HCT116 (cell line): ENCODE measurements at regions of chr19 and their contacts with region 1.

Region 1: DNA sequence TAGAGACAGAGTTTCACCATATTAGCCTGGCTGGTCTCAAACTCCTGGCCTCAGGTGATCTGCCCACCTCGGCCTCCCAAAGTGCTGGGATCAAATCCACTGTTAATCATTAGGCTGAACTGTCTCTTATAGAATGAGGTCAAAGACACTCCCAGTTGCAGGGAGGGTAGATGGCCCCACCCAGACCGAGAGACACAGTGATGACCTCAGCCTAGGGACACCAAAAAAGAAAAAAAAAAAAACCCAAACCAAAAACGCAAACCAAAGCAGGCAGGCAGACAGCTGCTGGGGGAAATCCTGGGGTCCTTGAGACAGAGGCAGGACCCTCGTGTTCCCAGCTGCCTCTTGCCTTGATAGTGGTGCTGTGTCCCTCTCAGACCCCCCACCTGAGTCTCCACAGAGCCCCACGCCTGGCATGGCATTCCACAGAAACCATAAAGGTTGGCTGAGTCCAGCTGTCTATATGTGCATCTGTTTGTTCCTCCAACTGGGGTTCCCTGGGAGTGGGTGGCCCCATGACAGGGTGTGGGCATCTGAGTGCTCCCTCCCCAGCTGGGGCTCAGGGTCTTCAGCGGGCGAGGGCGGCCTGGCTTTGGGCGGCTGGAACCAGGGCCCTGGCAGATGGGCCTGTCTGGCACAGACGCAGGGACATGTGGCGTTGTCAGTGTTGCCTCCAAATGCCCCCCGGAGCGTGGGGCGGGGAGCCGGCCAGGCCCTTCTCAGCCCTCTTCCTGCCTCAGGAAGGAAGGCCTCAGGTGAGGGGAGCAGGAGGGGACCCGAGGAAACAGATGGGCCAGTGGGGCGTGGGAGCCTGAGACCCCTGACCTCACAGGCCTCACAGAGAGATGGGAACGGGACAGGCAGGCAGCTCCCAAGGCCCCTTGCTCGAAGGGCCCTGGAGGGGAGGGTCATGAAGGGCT is 5.2 kb downstream of the DAND5 start:
- DNase-seq: no peak
- ATAC-seq: no peak
- H3K4me3 ChIP-seq: no peak overlapping the region
- H3K27ac ChIP-seq: no peak overlapping the region
- H3K4me1 ChIP-seq: peaks cover 0 to 15% of the 10 kb centered on the region in 2 experiments; a peak in 2 of 4 replicates
- H3K27me3 ChIP-seq: no peaks in the 10 kb centered on the region
- CTCF ChIP-seq: no peak
- POLR2A ChIP-seq: no peak
- RAD21 ChIP-seq: no peak

Region 2: GRCh38 chr19:12994701-12995595 is 20.4 kb after region 1 on chr19 and contains the start of gene NFIX:
- CTCF ChIA-PET with region 1: no interaction called
- POLR2A ChIA-PET with region 1: no interaction called
- RAD21 ChIA-PET with region 1: no interaction called
- intact Hi-C with region 1: no loop called
- DNase-seq: no peak
- ATAC-seq: peak; percentile 44
- H3K4me3 ChIP-seq: peak within 1 kb of the TSS; percentile 65 to 81
- H3K27ac ChIP-seq: peak within 1 kb of the TSS; percentile 71; the same call in 1 of the 2 replicates
- H3K4me1 ChIP-seq: peaks cover 5 to 17% of the 10 kb centered on the region in 2 experiments; a peak in 3 of 4 replicates
- H3K27me3 ChIP-seq: no peaks in the 10 kb centered on the region
- CTCF ChIP-seq: no peak
- POLR2A ChIP-seq: no peak
- RAD21 ChIP-seq: no peak
- total RNA-seq, gene NFIX: 34.8 TPM

Region 3: DNA sequence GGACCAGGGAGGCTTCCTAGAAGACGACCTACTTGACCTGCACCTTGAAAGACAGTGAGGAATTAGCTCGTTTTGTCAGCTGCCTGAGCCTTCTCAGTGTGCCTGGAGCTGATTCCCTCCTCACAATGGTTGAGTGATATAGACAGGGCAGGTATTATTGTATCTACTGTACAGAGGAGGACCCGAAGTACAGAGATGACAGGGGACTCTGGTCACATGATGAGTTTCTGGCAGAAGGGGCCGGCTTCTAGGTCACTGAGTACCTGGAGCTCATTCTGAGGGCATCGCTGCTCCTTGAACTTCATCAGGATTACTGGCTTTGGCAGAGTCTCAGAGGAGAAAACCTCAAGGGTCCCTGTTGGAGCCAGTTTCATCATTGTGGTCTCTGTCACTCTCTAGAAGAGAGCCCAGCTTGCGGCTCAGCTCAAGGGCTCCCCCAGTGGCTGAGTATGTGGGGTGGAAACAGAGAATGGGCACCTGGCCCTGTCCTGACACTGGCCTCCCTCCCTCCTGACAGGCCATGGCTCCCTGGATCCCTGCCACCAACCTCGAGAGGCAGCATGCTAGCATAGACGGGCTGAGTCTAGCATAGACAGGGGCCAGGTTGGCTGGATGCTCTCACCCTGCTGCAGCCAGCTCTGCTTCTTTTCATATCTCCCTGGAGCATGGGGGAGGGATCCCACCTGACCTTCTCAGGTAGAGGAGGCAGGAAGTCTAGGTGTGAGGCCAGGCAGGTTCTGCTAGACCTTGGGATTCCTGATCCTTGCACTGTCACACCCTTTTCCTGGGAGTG is 59.5 kb after region 1 on chr19:
- CTCF ChIA-PET with region 1: interaction called, 11 read pairs
- POLR2A ChIA-PET with region 1: no interaction called
- RAD21 ChIA-PET with region 1: interaction called in 1 of 2 experiments, 5 read pairs
- intact Hi-C with region 1: no loop called
- DNase-seq: peak; percentile 39
- ATAC-seq: peak; percentile 80
- H3K4me3 ChIP-seq: no peak overlapping the region
- H3K27ac ChIP-seq: no peak overlapping the region
- H3K4me1 ChIP-seq: peaks cover 55 to 76% of the 10 kb centered on the region in 2 experiments
- H3K27me3 ChIP-seq: no peaks in the 10 kb centered on the region
- CTCF ChIP-seq: peak; percentile 63 to 96 (median 94); a peak in 5 of 6 replicates
- POLR2A ChIP-seq: no peak
- RAD21 ChIP-seq: peak; percentile 54

Region 4: DNA sequence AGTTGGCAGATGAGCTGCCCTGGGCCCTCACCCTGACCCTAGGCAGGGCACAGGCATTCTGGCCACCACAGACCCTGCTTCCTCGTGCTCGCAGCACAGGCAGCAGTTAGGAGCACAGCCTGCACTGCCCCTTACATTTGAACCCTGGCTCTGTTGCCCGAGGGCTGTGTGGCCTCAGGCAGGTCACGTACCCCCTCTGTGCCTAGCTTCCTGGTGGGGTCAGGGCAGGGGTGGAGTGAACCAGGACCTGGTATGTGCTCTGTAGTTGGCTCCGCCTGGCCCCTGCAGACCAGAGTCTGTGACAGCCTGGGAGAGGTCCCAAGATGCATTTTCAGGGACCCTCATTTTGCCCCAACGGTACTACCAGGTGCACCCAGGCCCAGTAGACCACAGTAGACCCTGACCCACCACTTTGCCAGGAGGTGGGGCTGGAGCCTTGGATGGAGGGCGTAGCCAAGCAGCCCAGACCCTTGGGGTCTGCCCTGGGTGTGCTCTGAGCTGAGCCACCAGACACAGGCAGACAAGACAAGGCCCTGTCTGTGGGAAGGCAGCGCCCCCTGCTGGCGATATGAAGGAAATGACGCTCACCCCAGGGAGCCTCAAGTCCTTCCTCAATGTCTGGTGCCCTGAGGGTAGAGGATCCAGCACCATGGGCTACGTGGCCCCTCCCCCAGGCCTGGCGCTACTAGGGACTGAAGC is 119.0 kb after region 1 on chr19:
- CTCF ChIA-PET with region 1: interaction called, 94 read pairs
- POLR2A ChIA-PET with region 1: interaction called, 6 read pairs
- RAD21 ChIA-PET with region 1: interaction called, 20 to 25 read pairs
- intact Hi-C with region 1: loop called (anchors 1 kb)
- DNase-seq: peak; percentile 70
- ATAC-seq: peak; percentile 80
- H3K4me3 ChIP-seq: no peak overlapping the region
- H3K27ac ChIP-seq: no peak overlapping the region; the same call in 1 of the 2 replicates
- H3K4me1 ChIP-seq: peaks cover 6 to 27% of the 10 kb centered on the region in 2 experiments; a peak in 3 of 4 replicates
- H3K27me3 ChIP-seq: no peaks in the 10 kb centered on the region
- CTCF ChIP-seq: peak; percentile 84 to 94 (median 92)
- POLR2A ChIP-seq: no peak
- RAD21 ChIP-seq: peak; percentile 99

Region 5: DNA sequence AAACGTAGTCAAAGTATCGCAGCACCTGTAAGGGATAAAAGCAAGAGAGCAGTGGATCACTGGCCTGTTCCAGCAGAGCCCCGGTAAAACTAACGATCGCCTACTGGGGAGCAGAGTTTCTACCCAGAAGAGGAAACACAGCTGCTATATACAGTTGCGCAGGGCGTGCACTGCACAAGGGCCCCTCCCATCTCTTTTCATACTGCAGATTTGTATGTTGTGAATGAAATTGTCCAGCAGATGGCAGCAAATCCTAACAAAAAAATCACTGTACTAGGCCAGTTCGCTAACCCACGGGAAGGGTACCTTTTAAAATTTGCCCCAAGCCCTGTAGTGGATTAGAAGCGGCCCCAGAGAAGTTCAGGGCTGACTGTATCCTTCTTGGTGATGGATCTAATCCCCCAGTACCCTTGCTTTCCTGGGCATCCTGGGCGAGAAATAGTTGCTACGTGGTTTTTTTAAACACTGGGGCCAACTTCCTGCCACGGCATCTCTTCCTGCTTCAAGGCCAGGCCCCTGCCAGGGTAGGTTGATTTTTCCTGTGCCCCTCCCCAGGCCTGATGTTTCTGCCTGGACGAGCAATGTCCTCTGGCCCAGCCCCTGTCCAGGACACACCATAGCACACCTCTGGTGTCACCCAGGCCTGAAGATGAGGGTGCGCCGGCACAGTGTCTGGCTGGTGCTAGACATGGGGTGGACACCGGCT is 302.7 kb after region 1 on chr19:
- CTCF ChIA-PET with region 1: interaction called, 13 read pairs
- POLR2A ChIA-PET with region 1: no interaction called
- RAD21 ChIA-PET with region 1: interaction called in 1 of 2 experiments, 4 read pairs
- intact Hi-C with region 1: no loop called
- DNase-seq: peak; percentile 80
- ATAC-seq: peak; percentile 94
- H3K4me3 ChIP-seq: peak overlapping the region; percentile 33 to 35
- H3K27ac ChIP-seq: peak overlapping the region; percentile 11; the same call in 1 of the 2 replicates
- H3K4me1 ChIP-seq: peaks cover 4 to 32% of the 10 kb centered on the region in 2 experiments; a peak in 3 of 4 replicates
- H3K27me3 ChIP-seq: no peaks in the 10 kb centered on the region
- CTCF ChIP-seq: peak; percentile 47 to 88 (median 74)
- POLR2A ChIP-seq: no peak
- RAD21 ChIP-seq: peak; percentile 92

Region 6: DNA sequence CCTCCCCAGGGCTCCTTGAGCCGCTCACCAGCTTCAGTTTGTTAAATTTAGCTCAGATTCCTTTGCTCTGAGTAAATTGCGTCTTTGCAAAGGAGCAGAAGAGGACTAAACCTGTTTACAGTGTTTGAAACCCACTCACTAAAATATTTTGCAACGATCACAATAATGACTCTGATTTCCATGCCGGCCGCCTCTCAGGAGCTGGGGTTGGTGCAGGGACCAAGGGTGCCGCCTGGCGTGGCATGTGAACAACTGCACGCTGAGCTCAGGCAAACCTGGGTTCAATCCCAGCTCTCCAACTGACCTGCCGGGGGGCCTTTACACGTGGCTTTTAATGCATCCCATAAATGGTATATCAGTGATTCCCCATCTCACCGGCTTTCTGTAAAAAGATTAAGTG is 600.4 kb after region 1 on chr19:
- CTCF ChIA-PET with region 1: interaction called, 14 read pairs
- POLR2A ChIA-PET with region 1: no interaction called
- RAD21 ChIA-PET with region 1: no interaction called
- intact Hi-C with region 1: no loop called
- DNase-seq: peak; percentile 16
- ATAC-seq: peak; percentile 95
- H3K4me3 ChIP-seq: no peak overlapping the region
- H3K27ac ChIP-seq: no peak overlapping the region
- H3K4me1 ChIP-seq: peaks cover 0 to 6% of the 10 kb centered on the region in 2 experiments; a peak in 1 of 4 replicates
- H3K27me3 ChIP-seq: no peaks in the 10 kb centered on the region
- CTCF ChIP-seq: peak; percentile 75 to 79 (median 78)
- POLR2A ChIP-seq: no peak
- RAD21 ChIP-seq: peak; percentile 89

Region 7: GRCh38 chr19:13597640-13598039 is 623.1 kb after region 1 on chr19:
- CTCF ChIA-PET with region 1: no interaction called
- POLR2A ChIA-PET with region 1: no interaction called
- RAD21 ChIA-PET with region 1: no interaction called
- intact Hi-C with region 1: loop called (anchors 10 kb)
- DNase-seq: peak; percentile 57
- ATAC-seq: peak; percentile 98
- H3K4me3 ChIP-seq: no peak overlapping the region
- H3K27ac ChIP-seq: no peak overlapping the region
- H3K4me1 ChIP-seq: no peaks in the 10 kb centered on the region
- H3K27me3 ChIP-seq: 0 out of 2 replicates have a peak, but pooled peaks cover 4% of the 10 kb centered on the region
- CTCF ChIP-seq: peak; percentile 59 to 72 (median 64)
- POLR2A ChIP-seq: no peak
- RAD21 ChIP-seq: peak; percentile 95